ENCODE measurements at regions of chr6 and their contacts with region 1.

Region 1: DNA sequence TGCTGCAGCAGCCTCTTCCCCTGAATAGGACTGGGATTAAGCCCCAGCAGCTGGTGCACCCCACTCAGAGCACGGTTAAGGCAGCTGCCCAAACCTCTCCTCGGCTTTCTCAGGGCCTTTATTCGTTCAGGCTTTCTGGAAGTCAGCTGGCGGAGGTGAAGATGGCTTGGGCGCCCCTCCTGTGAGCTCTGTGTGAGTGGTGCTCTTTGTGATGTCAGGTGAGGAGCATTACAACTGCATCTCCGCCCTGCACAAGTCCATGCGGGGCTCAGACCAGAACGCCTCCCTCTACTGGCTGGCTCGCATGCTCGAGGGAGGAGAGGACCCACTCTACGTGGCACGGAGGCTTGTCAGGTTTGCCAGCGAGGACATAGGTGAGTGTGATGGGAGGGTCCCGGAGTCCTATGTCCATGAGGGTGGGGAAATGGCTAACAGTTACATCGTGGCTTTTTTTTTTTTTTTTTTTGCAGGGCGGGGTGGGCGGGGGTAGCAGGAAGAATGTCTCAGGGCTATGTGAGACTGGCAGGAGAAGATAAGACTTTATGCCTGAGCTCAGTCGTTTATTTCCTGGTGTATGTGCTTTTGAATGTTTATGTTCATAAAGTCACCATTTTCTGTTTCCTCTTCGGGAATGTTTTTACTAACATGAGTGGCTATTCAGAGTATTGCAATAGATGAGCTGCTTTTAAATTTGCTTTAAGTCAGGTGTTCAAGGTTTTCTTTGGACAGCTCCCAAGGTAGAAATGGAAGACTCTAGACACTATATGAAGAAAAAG is 18.2 kb downstream of the WRNIP1 start:
- DNase-seq: peak; percentile 41
- H3K4me3 ChIP-seq: no peak overlapping the region
- H3K27ac ChIP-seq: peak overlapping the region; percentile 26 to 62 (median 49)
- H3K4me1 ChIP-seq: peaks cover 0 to 17% (median 7%) of the 10 kb centered on the region in 4 donors
- H3K27me3 ChIP-seq: no peaks in the 10 kb centered on the region
- CTCF ChIP-seq: peak in 2 of 5 experiments; percentile 8 to 19
- EP300 ChIP-seq: no peak
- POLR2A ChIP-seq: no peak

Region 2: DNA sequence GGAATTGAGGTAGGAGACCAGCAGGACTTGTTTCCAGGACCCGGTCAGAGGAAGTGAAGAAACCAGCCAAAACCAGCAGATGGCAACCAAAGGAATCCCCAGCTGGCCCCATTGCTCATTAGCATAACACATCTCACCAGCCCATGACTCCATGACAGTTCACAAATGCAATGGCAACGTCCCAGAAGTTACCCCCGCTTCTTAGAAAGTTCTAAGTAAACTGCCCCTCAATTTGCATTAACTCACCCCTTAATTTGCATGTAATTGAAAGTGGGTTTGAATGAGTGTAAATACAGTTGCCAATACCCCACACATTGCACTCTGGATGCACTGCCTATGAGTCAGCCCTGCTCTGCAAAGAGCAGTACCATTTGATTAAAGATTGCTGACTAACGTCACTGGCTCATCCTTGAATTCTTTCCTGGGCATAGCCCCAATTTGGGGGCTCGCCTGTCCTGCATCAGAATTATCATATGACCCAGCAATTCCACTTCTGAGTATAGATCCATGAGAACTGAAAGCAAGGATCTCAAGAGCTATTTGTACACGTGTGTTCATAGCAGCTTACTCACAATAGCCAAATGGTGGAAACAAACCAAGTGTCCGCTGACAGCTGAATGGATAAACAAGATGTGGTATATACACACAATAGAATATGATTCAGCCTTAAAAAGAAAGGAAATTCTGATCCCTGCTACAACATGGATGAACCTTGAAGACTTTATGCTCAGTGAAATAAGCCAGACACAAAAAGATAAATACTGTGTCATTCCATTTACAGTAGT is 69.1 kb before region 1 on chr6:
- in situ Hi-C with region 1: no loop called
- intact Hi-C with region 1: no loop called
- DNase-seq: no peak
- H3K4me3 ChIP-seq: no peak overlapping the region
- H3K27ac ChIP-seq: peak overlapping the region in 2 of 4 donors; percentile 14 to 54
- H3K4me1 ChIP-seq: peaks cover 0 to 19% (median 1%) of the 10 kb centered on the region in 4 donors
- H3K27me3 ChIP-seq: no peaks in the 10 kb centered on the region
- CTCF ChIP-seq: no peak
- EP300 ChIP-seq: no peak
- POLR2A ChIP-seq: no peak

Region 3: GRCh38 chr6:2900821-2901644 is 117.7 kb after region 1 on chr6:
- in situ Hi-C with region 1: no loop called
- intact Hi-C with region 1: no loop called
- DNase-seq: no peak
- H3K4me3 ChIP-seq: peak overlapping the region in 1 of 4 donors; percentile 60
- H3K27ac ChIP-seq: peak overlapping the region in 3 of 4 donors; percentile 1 to 80 (median 17)
- H3K4me1 ChIP-seq: peaks cover 0 to 21% (median 7%) of the 10 kb centered on the region in 4 donors
- H3K27me3 ChIP-seq: no peaks in the 10 kb centered on the region
- CTCF ChIP-seq: no peak
- EP300 ChIP-seq: no peak
- POLR2A ChIP-seq: no peak

Region 4: GRCh38 chr6:2921520-2922115 is 138.2 kb after region 1 on chr6:
- in situ Hi-C with region 1: loop called in 1 of 4 experiments (anchors 10 kb)
- intact Hi-C with region 1: no loop called
- DNase-seq: no peak
- H3K4me3 ChIP-seq: no peak overlapping the region
- H3K27ac ChIP-seq: no peak overlapping the region
- H3K4me1 ChIP-seq: peaks cover 0 to 5% (median 0%) of the 10 kb centered on the region in 4 donors
- H3K27me3 ChIP-seq: no peaks in the 10 kb centered on the region
- CTCF ChIP-seq: no peak
- EP300 ChIP-seq: no peak
- POLR2A ChIP-seq: no peak

Region 5: GRCh38 chr6:3202999-3203696 is 419.8 kb after region 1 on chr6:
- in situ Hi-C with region 1: no loop called
- intact Hi-C with region 1: loop called (anchors 5 kb)
- DNase-seq: no peak
- H3K4me3 ChIP-seq: no peak overlapping the region
- H3K27ac ChIP-seq: no peak overlapping the region
- H3K4me1 ChIP-seq: no peaks in the 10 kb centered on the region
- H3K27me3 ChIP-seq: no peaks in the 10 kb centered on the region
- CTCF ChIP-seq: no peak
- EP300 ChIP-seq: no peak
- POLR2A ChIP-seq: no peak

Measured in transverse colon (tissue), 4 donors.